Left cardiac atrium (tissue), 4 donors: ENCODE measurements at regions of chr19 and their contacts with region 1.

Region 1: GRCh38 chr19:4909897-4910593 is 744 bp downstream of the UHRF1 start:
- DNase-seq: peak; percentile 95
- ATAC-seq: peak; percentile 93 to 95

Region 2: GRCh38 chr19:4815426-4816201 is 94.4 kb before region 1 on chr19:
- intact Hi-C with region 1: loop called (anchors 2 to 10 kb)
- DNase-seq: peak; percentile 93
- ATAC-seq: peak; percentile 90 to 95

Region 3: GRCh38 chr19:4870025-4870700 is 39.9 kb before region 1 on chr19:
- intact Hi-C with region 1: loop called in 1 of 2 experiments (anchors 2 kb)
- DNase-seq: peak; percentile 68
- ATAC-seq: peak in 1 of 2 donors; percentile 63